Activated naive CD4-positive, alpha-beta T cell treated with anti-CD3 and anti-CD28 coated beads for 36 hours (primary cell): ENCODE measurements at regions of chr4 and their contacts with region 1.

Region 1: GRCh38 chr4:158850800-158851644 is 82.2 kb downstream of the FNIP2 start:
- DNase-seq: no peak
- H3K4me3 Mint-ChIP-seq: no peak overlapping the region
- H3K27ac Mint-ChIP-seq: no peak overlapping the region
- H3K4me1 Mint-ChIP-seq: peaks cover 9% of the 10 kb centered on the region
- H3K27me3 Mint-ChIP-seq: no peaks in the 10 kb centered on the region

Region 2: GRCh38 chr4:158259955-158260575 is 591.0 kb before region 1 on chr4:
- CTCF ChIA-PET with region 1: interaction called, 3 read pairs
- intact Hi-C with region 1: loop called (anchors 2 kb)
- DNase-seq: no peak
- H3K4me3 Mint-ChIP-seq: no peak overlapping the region
- H3K27ac Mint-ChIP-seq: no peak overlapping the region
- H3K4me1 Mint-ChIP-seq: no peaks in the 10 kb centered on the region
- H3K27me3 Mint-ChIP-seq: no peaks in the 10 kb centered on the region

Region 3: DNA sequence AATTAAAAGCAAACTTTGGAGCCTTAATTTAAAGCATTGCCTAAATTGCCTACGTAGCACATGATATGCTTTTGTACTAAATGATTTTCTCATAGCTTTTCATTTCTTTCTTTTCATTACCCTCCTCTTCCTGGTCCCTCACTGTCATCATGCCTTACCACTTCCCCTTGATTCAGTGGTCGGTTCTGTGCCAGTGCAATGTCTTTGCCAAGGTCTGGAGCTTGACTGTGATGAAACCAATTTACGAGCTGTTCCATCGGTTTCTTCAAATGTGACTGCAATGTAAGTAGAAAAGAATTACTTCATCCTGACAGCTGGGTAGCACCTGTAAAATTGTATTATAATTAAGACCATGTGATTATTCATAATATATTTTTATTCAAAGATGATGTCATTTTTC is 251.9 kb before region 1 on chr4:
- CTCF ChIA-PET with region 1: no interaction called
- intact Hi-C with region 1: no loop called
- DNase-seq: no peak
- H3K4me3 Mint-ChIP-seq: no peak overlapping the region
- H3K27ac Mint-ChIP-seq: no peak overlapping the region
- H3K4me1 Mint-ChIP-seq: no peaks in the 10 kb centered on the region
- H3K27me3 Mint-ChIP-seq: peaks cover 8% of the 10 kb centered on the region

Region 4: DNA sequence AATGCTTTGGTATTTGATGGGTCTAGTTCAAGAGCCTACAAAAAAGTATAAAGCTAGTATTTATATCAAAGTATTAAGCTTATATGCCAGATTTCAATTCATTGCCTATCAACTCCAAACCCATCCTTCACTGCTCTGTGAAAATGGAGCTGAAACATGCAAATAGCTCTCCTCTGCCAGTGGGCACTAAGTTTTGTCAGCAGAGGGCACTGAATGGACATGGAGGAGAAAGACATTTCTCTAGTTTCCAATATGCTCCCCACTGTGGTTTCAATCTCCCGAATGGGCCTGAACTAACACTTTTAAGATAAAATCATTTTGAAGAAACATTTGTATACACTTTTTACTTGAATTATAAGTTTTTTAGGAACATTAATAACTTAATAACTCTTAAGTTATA is 140.2 kb before region 1 on chr4:
- CTCF ChIA-PET with region 1: interaction called, 10 read pairs
- intact Hi-C with region 1: no loop called
- DNase-seq: peak; percentile 8
- H3K4me3 Mint-ChIP-seq: no peak overlapping the region
- H3K27ac Mint-ChIP-seq: no peak overlapping the region
- H3K4me1 Mint-ChIP-seq: no peaks in the 10 kb centered on the region
- H3K27me3 Mint-ChIP-seq: no peaks in the 10 kb centered on the region

Region 5: GRCh38 chr4:158768555-158769174 is 82.4 kb before region 1 on chr4 and contains the start of gene FNIP2:
- CTCF ChIA-PET with region 1: interaction called, 3 read pairs
- intact Hi-C with region 1: loop called (anchors 1 kb)
- DNase-seq: peak; percentile 73
- H3K4me3 Mint-ChIP-seq: peak within 1 kb of the TSS; percentile 96
- H3K27ac Mint-ChIP-seq: peak within 1 kb of the TSS; percentile 90
- H3K4me1 Mint-ChIP-seq: peaks cover 39% of the 10 kb centered on the region
- H3K27me3 Mint-ChIP-seq: no peaks in the 10 kb centered on the region
- total RNA-seq, gene FNIP2: 10.1 to 11.3 TPM

Region 6: GRCh38 chr4:159201168-159201567 is 350.1 kb after region 1 on chr4:
- CTCF ChIA-PET with region 1: interaction called, 26 read pairs
- intact Hi-C with region 1: no loop called
- DNase-seq: no peak
- H3K4me3 Mint-ChIP-seq: no peak overlapping the region
- H3K27ac Mint-ChIP-seq: no peak overlapping the region
- H3K4me1 Mint-ChIP-seq: peaks cover 30% of the 10 kb centered on the region
- H3K27me3 Mint-ChIP-seq: no peaks in the 10 kb centered on the region